Breast epithelium (tissue), 4 donors: ENCODE measurements at regions of chr13 and their contacts with region 1.

Region 1: GRCh38 chr13:89783221-89783755 is 1564.2 kb upstream of the MIR17HG start:
- DNase-seq: no peak
- H3K4me3 ChIP-seq: no peak overlapping the region
- H3K27ac ChIP-seq: no peak overlapping the region
- H3K4me1 ChIP-seq: no peaks in the 10 kb centered on the region
- H3K27me3 ChIP-seq: no peaks in the 10 kb centered on the region
- CTCF ChIP-seq: no peak
- POLR2A ChIP-seq: no peak

Region 2: DNA sequence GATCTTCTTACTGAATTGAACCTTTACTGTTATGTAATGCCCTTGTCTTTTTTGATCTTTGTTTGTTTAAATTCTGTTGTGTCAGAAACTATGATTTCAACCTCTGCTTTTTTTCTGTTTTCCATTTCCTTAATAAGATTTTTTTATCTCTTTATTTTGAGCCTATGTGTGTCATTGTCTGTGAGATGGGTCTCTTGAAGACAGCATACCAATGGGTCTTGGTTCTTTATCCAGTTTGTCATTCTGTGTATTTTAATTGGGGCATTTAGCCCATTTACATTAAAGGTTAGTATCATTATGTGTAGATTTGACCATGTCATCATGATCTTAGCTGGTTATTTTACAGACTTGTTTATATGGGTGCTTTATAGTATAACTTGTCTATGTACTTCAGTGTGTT is 308.9 kb before region 1 on chr13:
- intact Hi-C with region 1: no loop called
- DNase-seq: no peak
- H3K4me3 ChIP-seq: no peak overlapping the region
- H3K27ac ChIP-seq: no peak overlapping the region
- H3K4me1 ChIP-seq: no peaks in the 10 kb centered on the region
- H3K27me3 ChIP-seq: no peaks in the 10 kb centered on the region
- CTCF ChIP-seq: no peak
- POLR2A ChIP-seq: no peak

Region 3: DNA sequence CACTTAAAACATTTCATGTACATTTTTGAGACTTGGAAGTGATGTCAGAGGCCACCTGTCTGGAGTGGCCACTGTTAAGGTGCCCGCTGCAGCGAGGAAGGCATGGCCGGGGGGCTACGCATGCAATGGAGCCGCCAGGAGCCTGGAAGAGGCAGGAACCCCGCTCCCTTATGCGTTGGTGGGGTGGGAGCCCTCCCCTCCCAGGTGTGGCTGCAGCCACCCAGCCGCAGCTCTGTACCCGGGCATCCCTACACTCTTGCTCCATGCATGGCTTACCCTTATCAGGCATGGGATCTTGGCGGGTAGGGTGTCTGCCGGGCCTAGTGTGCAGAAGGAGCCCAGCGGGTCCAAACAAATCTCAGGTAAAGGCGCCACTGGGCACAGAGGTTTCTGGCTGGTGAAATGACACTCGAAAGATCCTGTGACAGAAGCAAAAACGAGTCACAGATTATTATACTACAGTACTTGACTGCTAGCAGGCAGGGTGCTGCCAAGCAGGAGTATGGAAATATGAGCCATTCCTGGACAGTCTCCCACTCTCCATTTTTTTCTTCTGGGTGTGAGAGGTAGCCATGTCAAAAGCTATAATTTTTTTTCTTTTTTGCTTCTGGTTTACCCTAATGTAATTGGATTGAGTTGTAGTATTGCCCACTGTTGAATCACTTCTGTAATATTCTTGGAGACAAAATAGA is 42.1 kb before region 1 on chr13:
- intact Hi-C with region 1: loop called (anchors 2 kb)
- DNase-seq: no peak
- H3K4me3 ChIP-seq: no peak overlapping the region
- H3K27ac ChIP-seq: no peak overlapping the region
- H3K4me1 ChIP-seq: no peaks in the 10 kb centered on the region
- H3K27me3 ChIP-seq: no peaks in the 10 kb centered on the region
- CTCF ChIP-seq: no peak
- POLR2A ChIP-seq: no peak

Region 4: GRCh38 chr13:89755729-89756492 is 27.4 kb before region 1 on chr13:
- intact Hi-C with region 1: no loop called
- DNase-seq: no peak
- H3K4me3 ChIP-seq: no peak overlapping the region
- H3K27ac ChIP-seq: no peak overlapping the region
- H3K4me1 ChIP-seq: no peaks in the 10 kb centered on the region
- H3K27me3 ChIP-seq: no peaks in the 10 kb centered on the region
- CTCF ChIP-seq: no peak
- POLR2A ChIP-seq: no peak

Region 5: GRCh38 chr13:89803839-89804238 is 20.6 kb after region 1 on chr13:
- intact Hi-C with region 1: no loop called
- DNase-seq: no peak
- H3K4me3 ChIP-seq: no peak overlapping the region
- H3K27ac ChIP-seq: no peak overlapping the region
- H3K4me1 ChIP-seq: no peaks in the 10 kb centered on the region
- H3K27me3 ChIP-seq: no peaks in the 10 kb centered on the region
- CTCF ChIP-seq: no peak
- POLR2A ChIP-seq: no peak